Transverse colon (tissue), 4 donors: ENCODE measurements at regions of chr2 and their contacts with region 1.

Region 1: GRCh38 chr2:196277002-196277401 is 105.6 kb upstream of the STK17B start:
- DNase-seq: no peak
- H3K4me3 ChIP-seq: no peak overlapping the region
- H3K27ac ChIP-seq: peak overlapping the region; percentile 71 to 82 (median 76)
- H3K4me1 ChIP-seq: peaks cover 11 to 39% (median 22%) of the 10 kb centered on the region in 4 donors
- H3K27me3 ChIP-seq: no peaks in the 10 kb centered on the region
- CTCF ChIP-seq: peak; percentile 52 to 73 (median 62)
- EP300 ChIP-seq: no peak
- POLR2A ChIP-seq: no peak

Region 2: DNA sequence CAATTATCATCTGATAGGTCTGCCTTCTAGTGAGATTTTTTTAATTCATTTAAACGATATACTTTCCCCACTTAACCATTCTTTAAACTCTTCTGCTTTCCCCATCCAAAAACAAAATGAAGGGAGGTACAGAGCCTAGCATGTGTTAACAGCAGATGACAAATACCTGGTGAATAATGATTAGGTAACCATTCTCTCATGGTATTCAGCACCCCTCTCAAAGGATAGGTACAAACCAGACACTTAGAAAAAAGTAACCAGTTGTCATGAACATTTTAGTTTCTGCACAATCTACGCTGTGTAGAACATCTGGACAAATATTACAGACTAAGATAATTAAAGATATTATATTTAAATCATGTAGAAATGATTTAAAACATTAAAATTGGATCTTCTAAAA is 264.7 kb before region 1 on chr2:
- in situ Hi-C with region 1: no loop called
- intact Hi-C with region 1: no loop called
- DNase-seq: no peak
- H3K4me3 ChIP-seq: no peak overlapping the region
- H3K27ac ChIP-seq: no peak overlapping the region
- H3K4me1 ChIP-seq: no peaks in the 10 kb centered on the region
- H3K27me3 ChIP-seq: no peaks in the 10 kb centered on the region
- CTCF ChIP-seq: no peak
- EP300 ChIP-seq: no peak
- POLR2A ChIP-seq: no peak

Region 3: GRCh38 chr2:196088203-196088602 is 188.8 kb before region 1 on chr2:
- in situ Hi-C with region 1: loop called in 3 of 4 experiments (anchors 10 to 25 kb)
- intact Hi-C with region 1: no loop called
- DNase-seq: peak; percentile 66
- H3K4me3 ChIP-seq: no peak overlapping the region
- H3K27ac ChIP-seq: no peak overlapping the region
- H3K4me1 ChIP-seq: peaks cover 0 to 8% (median 2%) of the 10 kb centered on the region in 4 donors
- H3K27me3 ChIP-seq: no peaks in the 10 kb centered on the region
- CTCF ChIP-seq: no peak
- EP300 ChIP-seq: no peak
- POLR2A ChIP-seq: no peak

Region 4: GRCh38 chr2:196160101-196160500 is 116.9 kb before region 1 on chr2:
- in situ Hi-C with region 1: loop called in 2 of 4 experiments (anchors 10 to 25 kb)
- intact Hi-C with region 1: no loop called
- DNase-seq: peak; percentile 62
- H3K4me3 ChIP-seq: no peak overlapping the region
- H3K27ac ChIP-seq: peak overlapping the region; percentile 63 to 72 (median 69)
- H3K4me1 ChIP-seq: peaks cover 0 to 15% (median 7%) of the 10 kb centered on the region in 4 donors
- H3K27me3 ChIP-seq: no peaks in the 10 kb centered on the region
- CTCF ChIP-seq: no peak
- EP300 ChIP-seq: no peak
- POLR2A ChIP-seq: peak; percentile 18

Region 5: GRCh38 chr2:196750982-196751635 is 474.1 kb after region 1 on chr2:
- in situ Hi-C with region 1: loop called in 1 of 4 experiments (anchors 25 kb)
- intact Hi-C with region 1: no loop called
- DNase-seq: peak; percentile 72
- H3K4me3 ChIP-seq: no peak overlapping the region
- H3K27ac ChIP-seq: no peak overlapping the region
- H3K4me1 ChIP-seq: peaks cover 0 to 13% (median 0%) of the 10 kb centered on the region in 4 donors
- H3K27me3 ChIP-seq: no peaks in the 10 kb centered on the region
- CTCF ChIP-seq: peak; percentile 57 to 78 (median 70)
- EP300 ChIP-seq: no peak
- POLR2A ChIP-seq: no peak